Posterior vena cava (tissue), 2 donors: ENCODE measurements at regions of chr14 and their contacts with region 1.

Region 1: GRCh38 chr14:80055667-80056496 is 155.4 kb downstream of the DIO2 start:
- DNase-seq: no peak

Region 2: GRCh38 chr14:80850197-80850814 is 794.4 kb after region 1 on chr14:
- intact Hi-C with region 1: loop called in 1 of 2 experiments (anchors 10 kb)
- DNase-seq: no peak